ENCODE measurements at regions of chr6 and their contacts with region 1.

Region 1: GRCh38 chr6:68114463-68115047 is 520.5 kb upstream of the ADGRB3 start:
- DNase-seq: no peak
- ATAC-seq: no peak
- H3K4me3 ChIP-seq: no peak overlapping the region
- H3K27ac ChIP-seq: no peak overlapping the region
- H3K4me1 ChIP-seq: no peaks in the 10 kb centered on the region
- H3K27me3 ChIP-seq: no peaks in the 10 kb centered on the region
- CTCF ChIP-seq: no peak

Region 2: GRCh38 chr6:66699385-66699784 is 1415.2 kb before region 1 on chr6:
- CTCF ChIA-PET with region 1: interaction called, 10 read pairs
- POLR2A ChIA-PET with region 1: no interaction called
- intact Hi-C with region 1: no loop called
- DNase-seq: no peak
- ATAC-seq: no peak
- H3K4me3 ChIP-seq: no peak overlapping the region
- H3K27ac ChIP-seq: no peak overlapping the region
- H3K4me1 ChIP-seq: no peaks in the 10 kb centered on the region
- H3K27me3 ChIP-seq: no peaks in the 10 kb centered on the region
- CTCF ChIP-seq: no peak

Region 3: GRCh38 chr6:67541586-67541985 is 573.0 kb before region 1 on chr6:
- CTCF ChIA-PET with region 1: no interaction called
- POLR2A ChIA-PET with region 1: no interaction called
- intact Hi-C with region 1: no loop called
- DNase-seq: peak; percentile 34
- ATAC-seq: peak; percentile 85
- H3K4me3 ChIP-seq: no peak overlapping the region
- H3K27ac ChIP-seq: no peak overlapping the region
- H3K4me1 ChIP-seq: no peaks in the 10 kb centered on the region
- H3K27me3 ChIP-seq: no peaks in the 10 kb centered on the region
- CTCF ChIP-seq: no peak

Region 4: GRCh38 chr6:67646550-67646949 is 468.0 kb before region 1 on chr6:
- CTCF ChIA-PET with region 1: no interaction called
- POLR2A ChIA-PET with region 1: no interaction called
- intact Hi-C with region 1: no loop called
- DNase-seq: no peak
- ATAC-seq: no peak
- H3K4me3 ChIP-seq: no peak overlapping the region
- H3K27ac ChIP-seq: no peak overlapping the region
- H3K4me1 ChIP-seq: no peaks in the 10 kb centered on the region
- H3K27me3 ChIP-seq: no peaks in the 10 kb centered on the region
- CTCF ChIP-seq: no peak

Region 5: GRCh38 chr6:68296126-68296525 is 181.6 kb after region 1 on chr6:
- CTCF ChIA-PET with region 1: no interaction called
- POLR2A ChIA-PET with region 1: no interaction called
- intact Hi-C with region 1: no loop called
- DNase-seq: no peak
- ATAC-seq: no peak
- H3K4me3 ChIP-seq: no peak overlapping the region
- H3K27ac ChIP-seq: no peak overlapping the region
- H3K4me1 ChIP-seq: no peaks in the 10 kb centered on the region
- H3K27me3 ChIP-seq: no peaks in the 10 kb centered on the region
- CTCF ChIP-seq: no peak